Left colon (tissue), 2 donors: ENCODE measurements at regions of chr21 and their contacts with region 1.

Region 1: GRCh38 chr21:43306911-43307676 is 119.8 kb downstream of the SIK1 start:
- DNase-seq: peak in 1 of 2 donors; percentile 54
- ATAC-seq: no peak

Region 2: DNA sequence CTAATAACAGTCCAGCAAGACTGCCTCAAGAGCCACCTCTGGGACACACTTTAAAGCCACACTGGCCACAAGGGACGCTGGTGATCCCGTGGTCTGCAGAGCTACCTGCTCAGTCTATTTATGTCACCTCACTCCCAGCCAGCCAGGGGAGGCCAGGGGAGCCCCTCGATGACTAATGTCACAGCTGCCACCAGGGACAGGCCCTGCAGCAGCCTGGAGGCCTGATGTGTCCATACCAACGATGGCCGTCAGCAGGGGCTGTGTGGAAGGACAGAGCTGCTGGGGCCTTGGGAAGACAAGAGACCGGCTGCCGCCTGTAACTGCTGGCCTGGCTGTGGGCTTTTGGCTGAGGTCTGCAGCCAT is 48.8 kb after region 1 on chr21:
- intact Hi-C with region 1: loop called in 1 of 2 experiments (anchors 5 kb)
- DNase-seq: no peak
- ATAC-seq: no peak